Common myeloid progenitor, CD34-positive (primary cell): ENCODE measurements at regions of chr17 and their contacts with region 1.

Region 1: GRCh38 chr17:79393358-79394202 is 217.3 kb downstream of the RBFOX3 start:
- DNase-seq: peak; percentile 44 to 73 (median 60)
- H3K4me3 ChIP-seq: no peak overlapping the region
- H3K27ac ChIP-seq: no peak overlapping the region
- H3K4me1 ChIP-seq: no peaks in the 10 kb centered on the region
- H3K27me3 ChIP-seq: peaks cover 0 to 88% (median 6%) of the 10 kb centered on the region in 5 experiments

Region 2: GRCh38 chr17:79087428-79088143 is 306.0 kb before region 1 on chr17:
- CTCF ChIA-PET with region 1: interaction called, 136 read pairs
- POLR2A ChIA-PET with region 1: interaction called, 3 read pairs
- DNase-seq: peak; percentile 34 to 71 (median 54)
- H3K4me3 ChIP-seq: no peak overlapping the region
- H3K27ac ChIP-seq: no peak overlapping the region
- H3K4me1 ChIP-seq: no peaks in the 10 kb centered on the region
- H3K27me3 ChIP-seq: peaks cover 0 to 4% (median under 1%) of the 10 kb centered on the region in 5 experiments

Region 3: DNA sequence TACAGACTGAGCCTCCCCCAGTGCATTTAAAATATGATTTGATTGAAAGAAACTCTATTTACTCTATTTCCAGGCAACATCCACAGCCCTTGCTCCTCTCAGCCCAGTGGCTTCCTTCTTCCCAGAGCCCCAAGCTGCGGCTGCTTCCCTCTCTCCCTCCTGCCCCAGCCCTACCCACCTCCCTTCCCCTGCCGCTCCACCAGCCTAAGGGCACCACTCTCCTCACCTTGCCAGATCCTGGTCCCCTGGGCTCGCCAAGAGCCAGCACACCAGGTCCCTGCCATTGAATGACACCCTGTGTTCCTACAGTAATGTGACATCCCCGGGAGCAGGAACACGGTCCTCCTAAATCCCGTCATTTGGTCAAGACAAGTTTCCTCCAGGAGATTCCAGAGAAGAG is 18.8 kb before region 1 on chr17:
- CTCF ChIA-PET with region 1: no interaction called
- POLR2A ChIA-PET with region 1: no interaction called
- DNase-seq: no peak
- H3K4me3 ChIP-seq: no peak overlapping the region
- H3K27ac ChIP-seq: no peak overlapping the region
- H3K4me1 ChIP-seq: peaks cover 0 to 6% (median 2%) of the 10 kb centered on the region in 4 experiments
- H3K27me3 ChIP-seq: peaks cover 2 to 62% (median 4%) of the 10 kb centered on the region in 5 experiments

Region 4: DNA sequence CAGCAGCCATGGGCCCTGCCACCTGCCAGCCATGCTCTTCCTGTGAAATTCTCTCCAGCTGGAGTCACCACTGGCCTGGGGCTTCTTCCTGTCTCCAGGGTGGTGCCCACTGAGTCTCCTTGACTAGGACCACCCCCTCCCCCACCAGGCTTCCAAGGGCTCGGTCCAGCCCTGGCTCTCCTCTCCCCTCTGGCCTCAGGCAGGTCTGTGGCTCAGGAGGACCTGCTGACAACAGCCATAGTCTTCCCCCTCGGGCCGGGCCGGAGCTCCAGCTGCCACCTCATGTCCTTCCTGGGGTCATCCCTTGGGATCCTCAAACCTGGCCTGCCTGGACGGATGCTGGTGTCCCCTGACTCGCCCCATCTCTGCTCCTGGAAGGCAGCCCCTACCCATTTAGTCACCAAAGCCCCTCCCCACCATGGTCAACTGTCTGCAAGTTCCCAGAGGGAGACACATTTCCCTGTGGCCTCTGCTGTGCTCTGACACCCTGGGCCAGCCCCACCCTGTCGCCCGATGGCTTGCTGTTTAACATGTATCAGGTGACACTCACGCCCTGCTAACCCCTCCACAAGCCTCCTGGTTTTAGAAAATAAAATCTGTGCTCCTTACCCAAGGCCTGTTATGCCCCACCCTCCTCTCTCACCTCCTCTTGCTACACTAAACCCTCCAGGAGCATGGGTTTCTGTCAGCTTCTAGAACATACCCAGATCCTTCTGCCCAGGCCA is 31.1 kb after region 1 on chr17:
- CTCF ChIA-PET with region 1: no interaction called
- POLR2A ChIA-PET with region 1: no interaction called
- DNase-seq: no peak
- H3K4me3 ChIP-seq: no peak overlapping the region
- H3K27ac ChIP-seq: no peak overlapping the region
- H3K4me1 ChIP-seq: peaks cover 0 to 5% (median 2%) of the 10 kb centered on the region in 4 experiments
- H3K27me3 ChIP-seq: peaks cover 0 to 37% (median 3%) of the 10 kb centered on the region in 5 experiments

Region 5: DNA sequence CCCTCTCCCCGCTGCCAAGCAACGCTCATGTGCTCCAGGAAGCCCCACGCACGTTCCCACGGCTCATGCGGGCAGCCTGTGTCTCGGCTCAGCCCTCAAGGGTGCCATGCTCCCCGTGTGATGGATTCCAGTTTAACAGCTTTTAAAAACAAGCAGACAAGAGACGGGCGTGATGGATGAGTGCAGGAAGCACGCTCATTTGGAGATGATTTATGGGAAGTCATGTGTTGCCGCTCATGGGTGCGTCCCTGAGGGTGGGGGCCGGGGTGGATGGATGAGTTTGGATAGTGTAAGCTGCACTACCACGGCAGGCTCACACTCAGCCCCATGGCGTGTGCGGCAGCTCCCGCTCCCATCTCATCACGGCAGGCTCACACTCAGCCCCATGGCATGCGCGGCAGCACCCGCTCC is 84.5 kb after region 1 on chr17:
- CTCF ChIA-PET with region 1: no interaction called
- POLR2A ChIA-PET with region 1: no interaction called
- DNase-seq: no peak
- H3K4me3 ChIP-seq: no peak overlapping the region
- H3K27ac ChIP-seq: no peak overlapping the region
- H3K4me1 ChIP-seq: no peaks in the 10 kb centered on the region
- H3K27me3 ChIP-seq: peaks cover 0 to 95% (median 14%) of the 10 kb centered on the region in 5 experiments